ENCODE measurements at regions of chr17 and their contacts with region 1.

Region 1: DNA sequence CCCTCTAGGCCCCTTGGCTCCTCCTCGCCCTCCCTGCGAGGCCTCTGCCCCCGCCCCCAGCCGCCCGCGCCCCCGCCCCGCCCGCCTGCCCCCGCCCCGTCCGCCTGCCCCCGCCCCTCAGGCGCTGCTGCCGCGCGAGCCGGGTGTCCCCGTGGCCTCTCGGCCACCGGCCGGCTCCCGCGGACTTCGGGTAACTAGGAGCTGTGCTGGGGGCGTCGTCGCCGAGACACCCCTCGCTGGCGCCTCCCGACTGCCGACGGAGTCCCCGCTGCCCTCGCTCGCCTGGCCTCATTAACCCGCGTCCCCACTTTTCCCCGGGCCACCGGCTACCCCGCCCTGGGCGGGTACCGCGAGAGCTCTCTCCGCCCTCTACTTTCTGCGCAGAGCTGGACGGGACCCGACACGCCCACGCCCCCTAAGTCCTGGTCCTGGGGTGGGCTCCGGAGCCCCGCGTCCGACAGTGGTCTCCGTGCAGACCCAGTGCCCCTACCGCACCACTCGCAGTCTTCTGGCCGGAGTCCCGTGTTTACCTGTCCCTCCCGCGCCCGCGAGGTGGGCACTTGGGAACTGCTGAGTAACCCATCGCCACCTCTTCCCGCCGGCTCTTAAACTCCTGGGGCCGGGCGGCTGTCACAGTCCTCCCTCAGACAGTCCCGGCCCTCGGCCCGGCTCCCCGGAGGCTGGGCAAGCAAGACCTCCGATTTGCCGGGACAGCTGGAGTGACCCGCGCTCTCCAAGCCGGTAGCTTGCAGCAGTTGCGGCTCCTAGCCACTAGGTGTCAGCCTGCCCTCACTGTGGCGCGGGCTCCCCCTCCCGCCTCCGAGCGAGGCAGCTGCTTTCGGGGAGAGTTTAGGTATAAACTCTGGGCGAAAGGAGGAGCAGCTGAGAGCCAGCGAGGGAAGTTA is at the start of gene TLCD1:
- DNase-seq: peak; percentile 91 to 96 (median 94)
- H3K4me3 ChIP-seq: peak within 1 kb of the TSS; percentile 86
- H3K27ac ChIP-seq: peak within 1 kb of the TSS; percentile 47 to 95
- H3K4me1 ChIP-seq: peaks cover 7% of the 10 kb centered on the region
- H3K27me3 ChIP-seq: no peaks in the 10 kb centered on the region
- CTCF ChIP-seq: peak; percentile 96 to 99 (median 99)
- EP300 ChIP-seq: no peak
- POLR2A ChIP-seq: peak; percentile 28
- total RNA-seq, gene TLCD1: 1.3 to 7.0 (median 1.6) TPM in 6 of 7 donors, not detected in the other

Region 2: DNA sequence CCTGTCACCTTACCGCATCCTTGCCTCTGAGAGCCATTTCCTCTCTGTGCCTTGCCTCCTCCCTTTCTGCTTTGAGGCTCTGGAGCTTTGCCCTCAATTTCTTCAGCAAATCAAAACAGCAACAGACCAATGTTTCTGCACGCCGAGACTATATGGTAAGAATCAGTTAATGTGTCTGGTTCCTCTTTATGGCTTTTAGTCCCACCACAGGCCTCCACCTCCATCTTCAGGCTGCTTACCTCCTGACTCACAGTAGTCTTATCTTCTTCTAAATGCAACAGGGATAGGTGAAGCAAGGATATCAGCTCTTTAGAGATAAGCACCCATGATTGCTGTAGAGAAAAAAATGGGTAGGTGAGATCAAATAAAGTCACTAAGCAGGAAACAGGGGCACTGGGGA is 140.6 kb before region 1 on chr17:
- intact Hi-C with region 1: no loop called
- DNase-seq: no peak
- H3K4me3 ChIP-seq: no peak overlapping the region
- H3K27ac ChIP-seq: no peak overlapping the region
- H3K4me1 ChIP-seq: no peaks in the 10 kb centered on the region
- H3K27me3 ChIP-seq: no peaks in the 10 kb centered on the region
- CTCF ChIP-seq: no peak
- EP300 ChIP-seq: no peak
- POLR2A ChIP-seq: no peak

Region 3: GRCh38 chr17:28743225-28744103 is 17.0 kb after region 1 on chr17 and contains the start of gene TRAF4:
- intact Hi-C with region 1: loop called in 2 of 4 experiments (anchors 2 kb)
- DNase-seq: peak; percentile 73 to 87 (median 81)
- H3K4me3 ChIP-seq: peak within 1 kb of the TSS; percentile 62
- H3K27ac ChIP-seq: peak within 1 kb of the TSS; percentile 30 to 68
- H3K4me1 ChIP-seq: peaks cover 12% of the 10 kb centered on the region
- H3K27me3 ChIP-seq: no peaks in the 10 kb centered on the region
- CTCF ChIP-seq: peak in 2 of 3 donors; percentile 54 to 71
- EP300 ChIP-seq: no peak
- POLR2A ChIP-seq: peak; percentile 96
- total RNA-seq, gene TRAF4: 12.9 to 61.3 (median 18.8) TPM

Region 4: GRCh38 chr17:28750178-28751047 is 23.9 kb after region 1 on chr17:
- intact Hi-C with region 1: loop called in 2 of 4 experiments (anchors 2 kb)
- DNase-seq: peak; percentile 89 to 95 (median 93)
- H3K4me3 ChIP-seq: no peak overlapping the region
- H3K27ac ChIP-seq: no peak overlapping the region
- H3K4me1 ChIP-seq: peaks cover 8% of the 10 kb centered on the region
- H3K27me3 ChIP-seq: no peaks in the 10 kb centered on the region
- CTCF ChIP-seq: peak; percentile 97 to 99 (median 98)
- EP300 ChIP-seq: no peak
- POLR2A ChIP-seq: no peak

Region 5: DNA sequence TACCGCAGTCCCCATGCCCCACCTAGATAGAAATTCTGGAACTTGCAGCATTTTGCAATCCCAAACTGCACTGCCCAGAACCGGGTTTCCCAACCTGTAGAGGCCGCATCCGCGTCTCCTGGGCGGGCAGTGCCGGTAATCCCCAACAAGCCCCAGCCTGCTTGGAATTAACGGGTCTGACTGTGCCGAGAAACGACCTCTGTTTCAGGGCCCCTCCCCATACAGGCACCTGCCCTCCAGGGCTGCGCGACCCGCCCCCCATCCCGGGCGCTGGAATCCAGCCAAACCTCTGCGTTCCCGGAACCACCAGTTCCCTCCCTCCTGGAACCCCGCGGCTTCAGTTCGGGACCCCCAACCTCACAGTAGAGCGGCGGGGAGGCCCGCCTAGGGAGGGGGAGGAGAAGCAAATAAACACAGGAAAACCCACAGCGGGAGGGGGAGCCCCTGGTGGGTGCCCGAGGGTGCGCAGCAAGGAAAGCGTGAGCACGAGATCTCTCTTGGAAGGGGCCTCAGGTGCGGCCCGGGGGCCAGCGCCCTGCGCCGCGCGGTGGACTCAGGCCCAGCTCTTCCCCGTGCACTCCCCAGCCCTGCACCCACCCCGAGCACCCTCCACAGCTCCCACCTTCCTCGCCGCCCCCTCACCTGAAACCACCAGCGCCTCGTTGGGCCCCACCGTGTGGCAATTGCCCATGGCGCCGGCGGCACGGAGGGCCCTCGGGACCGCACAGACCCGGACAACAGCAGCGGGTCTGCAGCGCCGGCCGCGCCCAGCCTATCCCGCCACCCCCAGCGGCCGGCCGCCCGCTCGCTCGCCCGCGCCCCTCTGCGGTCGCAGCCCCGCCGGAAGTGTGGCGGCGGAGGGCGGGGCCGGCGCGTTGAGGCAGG is 170.6 kb after region 1 on chr17 and contains the start of gene FLOT2:
- intact Hi-C with region 1: loop called in 1 of 4 experiments (anchors 10 kb)
- DNase-seq: peak; percentile 57 to 86 (median 76)
- H3K4me3 ChIP-seq: peak within 1 kb of the TSS; percentile 79
- H3K27ac ChIP-seq: peak within 1 kb of the TSS; percentile 76 to 88
- H3K4me1 ChIP-seq: peaks cover 7% of the 10 kb centered on the region
- H3K27me3 ChIP-seq: no peaks in the 10 kb centered on the region
- CTCF ChIP-seq: peak in 1 of 3 donors; percentile 11
- EP300 ChIP-seq: peak; percentile 59
- POLR2A ChIP-seq: peak; percentile 60
- total RNA-seq, gene FLOT2: 29.3 to 82.3 (median 75.0) TPM